ENCODE measurements at regions of chr2 and their contacts with region 1.

Region 1: GRCh38 chr2:95345566-95346230 is 48.6 kb downstream of the KCNIP3 start:
- DNase-seq: peak; percentile 73
- ATAC-seq: peak; percentile 92
- H3K4me3 ChIP-seq: peak overlapping the region; percentile 52
- H3K27ac ChIP-seq: peak overlapping the region; percentile 2; the same call in 1 of the 2 replicates
- H3K4me1 ChIP-seq: peaks cover 3% of the 10 kb centered on the region; the same call in 1 of the 2 replicates
- H3K27me3 ChIP-seq: peaks cover 29% of the 10 kb centered on the region
- CTCF ChIP-seq: peak; percentile 91
- POLR2A ChIP-seq: no peak
- RAD21 ChIP-seq: peak; percentile 81

Region 2: GRCh38 chr2:95121407-95122196 is 224.1 kb before region 1 on chr2 and contains the start of gene MRPS5:
- CTCF ChIA-PET with region 1: no interaction called
- POLR2A ChIA-PET with region 1: no interaction called
- dilution Hi-C with region 1: no loop called
- in situ Hi-C with region 1: no loop called
- intact Hi-C with region 1: loop called (anchors 5 kb)
- DNase-seq: peak; percentile 50
- ATAC-seq: peak; percentile 99
- H3K4me3 ChIP-seq: peak within 1 kb of the TSS; percentile 91
- H3K27ac ChIP-seq: peak within 1 kb of the TSS; percentile 99
- H3K4me1 ChIP-seq: no peaks in the 10 kb centered on the region
- H3K27me3 ChIP-seq: no peaks in the 10 kb centered on the region
- CTCF ChIP-seq: 0 out of 2 replicates have a peak, but pooled peaks have one; percentile 10
- POLR2A ChIP-seq: peak; percentile 58
- RAD21 ChIP-seq: no peak
- total RNA-seq, gene MRPS5: 27.6 and 35.8 TPM in 2 replicates

Region 3: DNA sequence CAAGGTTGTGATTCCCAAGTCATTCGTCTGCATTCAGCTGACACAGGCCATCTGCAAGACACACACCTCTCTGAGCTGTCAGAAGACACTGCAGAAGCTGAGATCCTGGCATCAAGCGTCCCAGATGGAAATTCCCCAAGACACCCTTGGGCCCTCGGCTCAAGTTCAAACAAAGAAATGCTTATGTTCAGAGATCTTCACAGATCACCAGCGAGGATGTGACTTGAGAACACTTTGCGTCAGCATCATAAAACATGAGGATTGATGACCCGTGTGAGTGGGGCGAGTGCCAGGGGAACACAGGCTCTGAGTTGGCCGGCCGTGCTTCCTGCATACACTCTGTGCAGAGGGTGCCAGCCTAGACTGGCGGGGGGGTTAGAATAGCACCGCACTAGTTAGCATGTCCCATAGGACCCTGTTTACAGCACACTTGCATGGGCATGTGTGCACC is 11.8 kb before region 1 on chr2:
- CTCF ChIA-PET with region 1: interaction called, 10 read pairs
- POLR2A ChIA-PET with region 1: no interaction called
- dilution Hi-C with region 1: no loop called
- in situ Hi-C with region 1: no loop called
- intact Hi-C with region 1: no loop called
- DNase-seq: peak; percentile 97
- ATAC-seq: peak; percentile 84
- H3K4me3 ChIP-seq: no peak overlapping the region
- H3K27ac ChIP-seq: no peak overlapping the region
- H3K4me1 ChIP-seq: peaks cover 11% of the 10 kb centered on the region
- H3K27me3 ChIP-seq: peaks cover 5% of the 10 kb centered on the region
- CTCF ChIP-seq: no peak
- POLR2A ChIP-seq: no peak
- RAD21 ChIP-seq: no peak

Region 4: DNA sequence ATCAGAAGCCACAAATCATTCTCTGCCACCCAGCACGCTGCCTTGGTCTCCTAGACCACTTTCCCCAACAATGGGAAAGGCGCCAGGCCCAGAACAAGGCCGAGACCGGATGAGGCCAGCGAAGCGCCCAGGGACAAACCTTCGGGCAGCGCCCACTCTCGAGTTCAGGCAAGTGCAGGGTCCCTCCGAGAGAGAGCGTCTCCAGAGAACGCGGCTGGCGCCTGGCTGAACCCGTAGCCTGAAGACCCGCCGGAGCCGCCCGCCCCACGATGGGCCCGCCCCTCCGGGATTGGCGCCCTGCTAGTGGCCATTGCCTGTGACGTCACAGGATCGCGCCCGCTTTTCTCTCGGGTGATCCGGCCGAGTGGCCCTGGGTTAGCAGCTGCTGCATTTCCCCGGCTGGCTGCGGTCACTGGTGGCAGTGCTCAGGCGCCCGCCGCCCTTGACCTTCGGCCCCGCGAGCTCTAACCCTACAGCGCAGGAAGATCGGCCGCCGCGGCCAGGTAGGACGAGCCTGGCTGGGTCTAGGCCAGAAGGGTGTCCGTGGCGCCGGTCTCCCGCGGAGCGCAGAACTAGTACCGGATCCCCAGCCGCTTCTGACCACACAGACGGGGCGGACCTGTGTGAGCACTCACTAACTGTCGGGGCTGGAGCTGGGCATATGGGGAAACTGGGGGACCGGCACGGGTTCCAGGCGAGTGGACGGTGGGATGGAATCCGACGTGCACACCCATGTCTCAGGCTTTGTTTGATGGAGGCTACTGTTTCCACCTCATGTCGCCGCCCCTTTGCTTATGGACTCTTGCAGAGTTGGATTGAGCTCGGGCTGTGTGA is 56.9 kb after region 1 on chr2 and contains the start of gene FAHD2A:
- CTCF ChIA-PET with region 1: no interaction called
- POLR2A ChIA-PET with region 1: no interaction called
- dilution Hi-C with region 1: no loop called
- in situ Hi-C with region 1: no loop called
- intact Hi-C with region 1: loop called (anchors 2 kb)
- DNase-seq: peak; percentile 84
- ATAC-seq: peak; percentile 96
- H3K4me3 ChIP-seq: peak within 1 kb of the TSS; percentile 84
- H3K27ac ChIP-seq: peak within 1 kb of the TSS; percentile 75
- H3K4me1 ChIP-seq: peaks cover 4% of the 10 kb centered on the region
- H3K27me3 ChIP-seq: no peaks in the 10 kb centered on the region
- CTCF ChIP-seq: no peak
- POLR2A ChIP-seq: peak; percentile 65; the same call in 1 of the 2 replicates
- RAD21 ChIP-seq: no peak
- total RNA-seq, gene FAHD2A: 35.0 and 36.2 TPM in 2 replicates

Region 5: DNA sequence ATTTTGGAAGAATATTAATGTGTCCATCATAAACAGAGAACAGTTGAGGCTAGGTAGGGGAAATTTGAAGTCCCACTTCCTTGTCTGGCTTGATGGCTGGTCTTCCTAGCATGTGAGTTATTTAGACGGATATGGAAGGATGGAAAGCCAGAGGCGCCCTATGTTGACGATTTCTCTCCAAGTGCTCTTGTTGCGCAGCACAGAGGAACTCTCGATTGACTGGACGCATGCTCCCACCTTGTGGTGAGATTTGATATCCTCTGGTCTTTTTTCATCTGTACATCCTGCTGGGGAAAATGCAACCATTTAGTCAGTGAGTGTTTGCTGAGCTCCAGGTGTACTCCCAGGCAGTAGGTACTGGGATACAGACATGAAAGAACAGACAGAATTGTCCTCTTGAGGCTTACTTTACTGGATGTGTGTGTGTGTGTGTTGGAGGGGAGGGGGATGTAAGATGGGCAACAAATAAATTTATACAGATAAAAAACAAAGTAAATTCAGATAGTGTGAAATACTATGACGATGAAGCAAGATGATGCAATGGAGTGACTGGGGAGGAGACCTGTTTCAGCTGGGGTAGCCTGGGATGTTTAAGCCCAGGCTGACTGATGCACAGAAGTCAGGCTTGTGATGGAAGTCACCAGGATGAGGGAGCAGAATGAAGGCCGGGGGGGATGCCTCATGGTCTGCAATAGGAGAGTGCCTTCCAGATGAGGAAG is 383.3 kb after region 1 on chr2:
- CTCF ChIA-PET with region 1: no interaction called
- POLR2A ChIA-PET with region 1: no interaction called
- dilution Hi-C with region 1: no loop called
- in situ Hi-C with region 1: no loop called
- intact Hi-C with region 1: loop called (anchors 5 kb)
- DNase-seq: peak; percentile 89
- ATAC-seq: peak; percentile 98
- H3K4me3 ChIP-seq: no peak overlapping the region
- H3K27ac ChIP-seq: no peak overlapping the region
- H3K4me1 ChIP-seq: no peaks in the 10 kb centered on the region
- H3K27me3 ChIP-seq: no peaks in the 10 kb centered on the region; the same call in 1 of the 2 replicates
- CTCF ChIP-seq: peak; percentile 83
- POLR2A ChIP-seq: peak; percentile 46; the same call in 1 of the 2 replicates
- RAD21 ChIP-seq: peak; percentile 95

Measured in IMR-90 (cell line).